Naive thymus-derived CD4-positive, alpha-beta T cell (primary cell): ENCODE measurements at regions of chr3 and their contacts with region 1.

Region 1: DNA sequence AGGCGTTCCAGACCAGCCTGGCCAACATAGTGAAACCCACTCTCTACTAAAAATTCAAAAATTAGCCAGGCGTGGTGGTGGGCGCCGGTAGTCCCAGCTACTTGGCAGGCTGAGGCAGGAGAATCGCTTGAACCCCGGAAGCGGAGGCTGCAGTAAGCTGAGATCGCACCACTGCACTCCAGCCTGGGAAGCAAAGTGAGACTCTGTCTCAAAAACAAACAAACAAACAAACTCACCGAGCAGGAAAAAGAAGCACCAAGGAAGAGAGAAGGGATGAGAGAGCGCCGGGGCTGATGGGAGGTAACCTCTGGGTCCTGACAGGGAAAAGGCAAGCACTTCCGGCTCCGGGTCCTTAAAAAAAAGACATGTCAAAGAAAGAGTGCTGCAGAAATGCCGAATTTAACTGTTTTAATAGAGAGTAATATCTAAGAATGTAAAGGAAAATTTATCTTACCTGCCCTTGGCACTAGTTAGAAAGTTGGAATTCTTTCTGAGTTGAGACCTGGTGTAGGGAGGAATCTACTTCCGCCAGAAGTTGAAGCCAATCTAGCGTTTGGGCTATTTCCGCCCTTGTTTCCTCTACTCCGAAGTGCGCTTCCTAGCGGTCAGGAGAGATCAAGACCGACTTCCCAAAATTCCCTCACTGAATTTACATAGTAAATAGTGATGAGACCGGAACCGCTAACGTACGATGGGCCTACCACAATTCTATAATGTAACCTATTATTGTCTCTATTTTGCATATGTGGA is 29.1 kb downstream of the EFCAB12 start:
- DNase-seq: peak; percentile 34 to 89 (median 81)
- ATAC-seq: peak; percentile 91
- H3K4me3 ChIP-seq: peak overlapping the region; percentile 70
- H3K4me3 Mint-ChIP-seq: peak overlapping the region; percentile 89 to 100 (median 97)
- H3K27ac ChIP-seq: peak overlapping the region; percentile 88
- H3K27ac Mint-ChIP-seq: peak overlapping the region; percentile 94 to 100 (median 98)
- H3K4me1 ChIP-seq: peaks cover 10 to 13% of the 10 kb centered on the region in 2 donors
- H3K4me1 Mint-ChIP-seq: peaks cover 23 to 47% (median 37%) of the 10 kb centered on the region in 7 donors
- H3K27me3 ChIP-seq: no peaks in the 10 kb centered on the region
- H3K27me3 Mint-ChIP-seq: no peaks in the 10 kb centered on the region

Region 2: DNA sequence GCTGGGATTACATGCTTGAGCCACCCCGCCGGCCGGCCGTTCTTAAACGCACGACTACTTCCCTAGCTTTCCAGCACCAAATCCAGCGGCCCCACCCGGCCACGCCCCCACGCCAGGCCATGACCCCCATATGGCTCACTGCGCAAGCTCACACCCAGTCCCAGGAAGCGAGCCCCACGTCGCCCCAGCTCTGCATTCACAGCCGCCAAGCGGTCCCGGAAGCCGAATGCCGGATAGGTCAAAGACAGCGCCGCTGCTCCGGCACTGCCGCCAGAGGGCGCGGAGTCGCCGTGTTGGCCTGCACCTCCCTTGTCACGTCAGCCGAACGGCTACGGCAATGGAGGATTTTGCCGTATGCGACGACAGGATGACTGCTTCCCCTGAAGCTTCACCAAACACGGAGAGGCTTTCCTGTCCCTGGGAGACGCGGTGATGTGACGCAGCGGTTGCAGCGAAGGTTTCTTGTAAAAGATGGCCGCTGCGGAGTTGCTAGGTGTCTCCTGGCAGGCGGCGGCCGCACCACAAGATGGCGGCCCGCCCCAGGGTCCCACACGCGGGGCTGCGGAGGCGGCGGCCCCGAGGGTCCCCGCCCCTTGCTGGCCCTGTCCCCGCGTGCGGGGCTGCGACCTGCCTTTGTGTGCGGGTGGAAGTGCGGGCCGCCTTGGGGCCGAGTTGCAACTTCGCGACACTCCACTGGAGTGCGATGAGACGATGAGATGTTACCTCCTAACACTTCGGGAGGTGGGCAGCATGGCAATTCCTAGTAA is 718.5 kb before region 1 on chr3:
- CTCF ChIA-PET with region 1: no interaction called
- POLR2A ChIA-PET with region 1: no interaction called
- intact Hi-C with region 1: no loop called
- DNase-seq: peak; percentile 94 to 98 (median 95)
- ATAC-seq: peak; percentile 95
- H3K4me3 ChIP-seq: peak overlapping the region; percentile 91
- H3K4me3 Mint-ChIP-seq: peak overlapping the region; percentile 84 to 98 (median 94)
- H3K27ac ChIP-seq: peak overlapping the region; percentile 92
- H3K27ac Mint-ChIP-seq: peak overlapping the region; percentile 95 to 100 (median 99)
- H3K4me1 ChIP-seq: peaks cover 11 to 14% of the 10 kb centered on the region in 2 donors
- H3K4me1 Mint-ChIP-seq: peaks cover 17 to 50% (median 38%) of the 10 kb centered on the region in 7 donors
- H3K27me3 ChIP-seq: no peaks in the 10 kb centered on the region
- H3K27me3 Mint-ChIP-seq: no peaks in the 10 kb centered on the region

Region 3: GRCh38 chr3:129428376-129429079 is 29.2 kb after region 1 on chr3 and contains the start of gene EFCAB12:
- CTCF ChIA-PET with region 1: interaction called, 6 read pairs
- POLR2A ChIA-PET with region 1: interaction called, 4 read pairs
- intact Hi-C with region 1: loop called (anchors 1 kb)
- DNase-seq: peak; percentile 78 to 90 (median 86)
- ATAC-seq: peak; percentile 98
- H3K4me3 ChIP-seq: peak within 1 kb of the TSS; percentile 63
- H3K4me3 Mint-ChIP-seq: peak within 1 kb of the TSS; percentile 78 to 97 (median 89)
- H3K27ac ChIP-seq: peak within 1 kb of the TSS; percentile 65
- H3K27ac Mint-ChIP-seq: peak within 1 kb of the TSS; percentile 60 to 91 (median 75)
- H3K4me1 ChIP-seq: peaks cover 0 to 13% of the 10 kb centered on the region in 2 donors
- H3K4me1 Mint-ChIP-seq: peaks cover 17 to 29% (median 22%) of the 10 kb centered on the region in 7 donors
- H3K27me3 ChIP-seq: no peaks in the 10 kb centered on the region
- H3K27me3 Mint-ChIP-seq: peaks cover 0 to 13% (median 0%) of the 10 kb centered on the region in 5 donors
- total RNA-seq, gene EFCAB12: 1.5 to 2.7 (median 2.3) TPM

Region 4: DNA sequence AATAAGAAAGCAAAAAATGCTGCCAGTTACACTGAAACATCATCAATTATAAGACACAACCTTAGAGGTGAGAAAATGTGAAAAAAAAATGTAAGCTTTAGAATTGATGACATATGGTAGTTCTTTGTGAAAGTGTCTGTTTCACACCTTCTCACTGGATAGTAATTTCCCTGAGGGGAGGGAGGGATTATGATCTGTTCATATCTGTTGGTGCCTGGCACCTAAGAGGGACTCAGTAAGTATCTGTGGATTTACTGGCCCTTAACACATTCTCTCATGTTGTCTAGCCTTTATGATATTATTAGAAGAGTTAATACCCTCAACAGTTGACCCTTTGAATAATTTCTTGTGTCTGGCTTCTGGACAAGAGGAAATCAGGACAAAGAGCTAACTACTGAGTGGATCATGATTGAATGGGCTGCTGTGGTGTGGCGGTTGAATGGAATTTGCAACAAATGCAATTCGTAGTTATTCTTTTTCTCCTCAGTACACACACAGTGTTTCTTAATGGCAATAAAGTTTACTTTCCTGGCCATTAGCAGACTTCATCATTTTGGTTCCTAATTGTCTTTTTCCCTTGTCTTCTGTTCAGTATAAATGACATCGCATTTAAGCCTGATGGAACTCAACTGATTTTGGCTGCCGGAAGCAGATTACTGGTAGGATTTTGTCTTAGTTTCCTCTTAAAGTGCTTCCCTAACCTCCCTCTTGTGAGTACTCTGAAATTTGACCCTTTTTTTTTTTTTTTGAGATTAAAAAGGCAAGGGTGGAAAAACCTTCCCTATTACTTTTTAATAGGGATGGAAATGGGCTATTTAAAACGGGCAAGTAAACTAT is 50.2 kb after region 1 on chr3:
- CTCF ChIA-PET with region 1: no interaction called
- POLR2A ChIA-PET with region 1: no interaction called
- intact Hi-C with region 1: no loop called
- DNase-seq: no peak
- ATAC-seq: no peak
- H3K4me3 ChIP-seq: no peak overlapping the region
- H3K4me3 Mint-ChIP-seq: peak overlapping the region in 1 of 10 donors; percentile 41
- H3K27ac ChIP-seq: no peak overlapping the region
- H3K27ac Mint-ChIP-seq: peak overlapping the region in 6 of 9 donors; percentile 9 to 94 (median 91)
- H3K4me1 ChIP-seq: peaks cover 0 to 3% of the 10 kb centered on the region in 2 donors
- H3K4me1 Mint-ChIP-seq: peaks cover 0 to 14% (median 13%) of the 10 kb centered on the region in 7 donors
- H3K27me3 ChIP-seq: no peaks in the 10 kb centered on the region
- H3K27me3 Mint-ChIP-seq: no peaks in the 10 kb centered on the region